ENCODE measurements at regions of chr11 and their contacts with region 1.

Region 1: GRCh38 chr11:129703846-129704245 is 111.8 kb upstream of the TMEM45B start:
- DNase-seq: peak in 1 of 2 donors; percentile 68
- H3K4me3 ChIP-seq: peak overlapping the region in 1 of 3 donors; percentile 33
- H3K27ac ChIP-seq: peak overlapping the region; percentile 86 to 88
- H3K4me1 ChIP-seq: peaks cover 0 to 5% of the 10 kb centered on the region in 2 donors
- H3K27me3 ChIP-seq: no peaks in the 10 kb centered on the region
- CTCF ChIP-seq: no peak
- POLR2A ChIP-seq: no peak

Region 2: GRCh38 chr11:129375751-129376657 is 327.8 kb before region 1 on chr11 and contains the start of gene BARX2:
- intact Hi-C with region 1: loop called (anchors 10 kb)
- DNase-seq: peak; percentile 60 to 70
- H3K4me3 ChIP-seq: peak within 1 kb of the TSS; percentile 9 to 69 (median 56)
- H3K27ac ChIP-seq: peak within 1 kb of the TSS; percentile 84 to 91
- H3K4me1 ChIP-seq: peaks cover 0 to 6% of the 10 kb centered on the region in 2 donors
- H3K27me3 ChIP-seq: peaks cover 0 to 52% of the 10 kb centered on the region in 2 donors
- CTCF ChIP-seq: peak in 2 of 3 donors; percentile 37 to 63
- POLR2A ChIP-seq: no peak
- total RNA-seq, gene BARX2: 8.2 to 19.5 TPM in 2 of 3 donors, not detected in the other

Region 3: DNA sequence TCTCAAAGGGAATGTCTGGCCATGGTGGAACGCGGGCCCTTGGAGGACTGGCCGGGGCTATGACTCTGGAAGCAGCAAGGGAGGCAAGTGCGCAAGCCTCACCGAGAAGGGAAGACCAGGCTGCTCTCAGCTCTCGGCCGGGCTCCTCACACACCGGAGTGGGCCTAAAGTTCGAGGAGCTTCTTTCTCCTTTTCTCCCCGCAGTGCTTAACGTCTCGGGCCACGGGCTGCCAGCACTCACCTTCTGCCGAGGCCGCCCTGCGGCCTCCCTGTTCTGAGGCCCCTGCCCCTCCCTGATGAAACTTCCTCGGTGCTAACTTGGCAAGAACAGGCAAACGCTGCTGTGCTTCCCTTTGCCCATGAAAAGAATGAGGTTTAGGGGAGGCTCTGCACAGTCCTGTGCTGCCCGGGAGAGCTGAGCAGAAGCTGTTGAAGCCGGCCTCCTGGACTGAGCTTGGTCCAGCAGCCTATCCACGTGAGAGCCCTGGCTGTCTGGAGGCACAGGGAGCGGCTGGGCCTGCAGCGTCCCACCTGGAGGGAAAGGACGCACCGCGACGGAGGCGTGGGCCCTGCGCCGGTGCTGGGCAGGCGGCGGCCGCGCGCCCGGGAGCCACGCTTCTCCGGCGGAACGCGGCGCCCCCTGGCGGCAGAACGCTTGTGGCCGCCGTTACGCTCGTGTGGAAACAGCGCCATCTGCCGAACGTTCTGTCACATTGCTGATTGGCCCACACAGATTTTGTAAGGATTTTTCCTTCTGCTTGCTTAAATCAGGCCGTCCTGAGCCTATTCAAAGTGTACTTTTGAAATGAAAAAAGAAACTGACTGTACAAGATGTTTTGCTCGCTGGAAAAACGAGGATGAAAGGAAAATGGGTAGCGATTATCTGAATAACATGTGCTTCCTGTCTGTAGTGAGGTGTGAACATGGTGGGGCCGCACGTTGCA is 46.8 kb after region 1 on chr11:
- intact Hi-C with region 1: no loop called
- DNase-seq: peak; percentile 59 to 76
- H3K4me3 ChIP-seq: peak overlapping the region in 2 of 3 donors; percentile 33 to 57
- H3K27ac ChIP-seq: peak overlapping the region; percentile 41 to 52
- H3K4me1 ChIP-seq: no peaks in the 10 kb centered on the region
- H3K27me3 ChIP-seq: no peaks in the 10 kb centered on the region
- CTCF ChIP-seq: peak; percentile 92 to 100 (median 95)
- POLR2A ChIP-seq: no peak